HCT116 (cell line): ENCODE measurements at regions of chr1 and their contacts with region 1.

Region 1: GRCh38 chr1:36420836-36421664 is 23.3 kb upstream of the LSM10 start:
- DNase-seq: peak; percentile 69
- ATAC-seq: peak; percentile 92
- H3K4me3 ChIP-seq: no peak overlapping the region
- H3K27ac ChIP-seq: no peak overlapping the region
- H3K4me1 ChIP-seq: peaks cover 6 to 27% of the 10 kb centered on the region in 2 experiments; a peak in 3 of 4 replicates
- H3K27me3 ChIP-seq: no peaks in the 10 kb centered on the region
- CTCF ChIP-seq: peak; percentile 89 to 94 (median 93)
- POLR2A ChIP-seq: no peak
- RAD21 ChIP-seq: peak; percentile 98

Region 2: GRCh38 chr1:36342481-36343478 is 78.3 kb before region 1 on chr1:
- CTCF ChIA-PET with region 1: interaction called, 7 read pairs
- POLR2A ChIA-PET with region 1: no interaction called
- RAD21 ChIA-PET with region 1: interaction called in 1 of 2 experiments, 4 read pairs
- intact Hi-C with region 1: loop called (anchors 1 kb)
- DNase-seq: no peak
- ATAC-seq: peak; percentile 90
- H3K4me3 ChIP-seq: no peak overlapping the region
- H3K27ac ChIP-seq: 0 out of 2 replicates have a peak overlapping the region, but pooled peaks have one; percentile 11
- H3K4me1 ChIP-seq: peaks cover 0 to 6% of the 10 kb centered on the region in 2 experiments; a peak in 1 of 4 replicates
- H3K27me3 ChIP-seq: no peaks in the 10 kb centered on the region
- CTCF ChIP-seq: peak; percentile 75 to 87 (median 83)
- POLR2A ChIP-seq: no peak
- RAD21 ChIP-seq: peak; percentile 97

Region 3: DNA sequence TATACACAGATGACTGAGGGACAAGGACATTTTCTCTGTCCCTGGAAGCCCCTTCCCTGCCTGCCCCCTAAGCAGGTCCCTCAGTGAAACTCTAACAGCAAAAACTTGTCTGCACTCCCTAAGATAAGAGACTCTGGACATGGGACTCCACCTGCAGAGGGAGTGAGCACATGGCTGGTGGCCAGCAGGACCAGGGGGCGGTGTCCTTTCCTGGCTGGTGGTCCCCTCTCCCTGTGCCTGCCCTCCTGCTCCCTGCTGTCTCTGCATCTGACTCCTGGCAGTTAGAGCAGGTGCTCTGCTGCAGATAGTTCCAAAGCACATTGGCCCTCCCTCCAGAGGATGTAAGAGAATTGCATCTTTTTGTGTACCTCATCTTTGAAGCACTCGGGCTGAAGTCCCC is 397.7 kb after region 1 on chr1:
- CTCF ChIA-PET with region 1: no interaction called
- POLR2A ChIA-PET with region 1: no interaction called
- RAD21 ChIA-PET with region 1: no interaction called
- intact Hi-C with region 1: no loop called
- DNase-seq: no peak
- ATAC-seq: no peak
- H3K4me3 ChIP-seq: no peak overlapping the region
- H3K27ac ChIP-seq: no peak overlapping the region
- H3K4me1 ChIP-seq: no peaks in the 10 kb centered on the region
- H3K27me3 ChIP-seq: peaks cover 69% of the 10 kb centered on the region
- CTCF ChIP-seq: no peak
- POLR2A ChIP-seq: no peak
- RAD21 ChIP-seq: no peak